Posterior vena cava (tissue), 2 donors: ENCODE measurements at regions of chr3 and their contacts with region 1.

Region 1: DNA sequence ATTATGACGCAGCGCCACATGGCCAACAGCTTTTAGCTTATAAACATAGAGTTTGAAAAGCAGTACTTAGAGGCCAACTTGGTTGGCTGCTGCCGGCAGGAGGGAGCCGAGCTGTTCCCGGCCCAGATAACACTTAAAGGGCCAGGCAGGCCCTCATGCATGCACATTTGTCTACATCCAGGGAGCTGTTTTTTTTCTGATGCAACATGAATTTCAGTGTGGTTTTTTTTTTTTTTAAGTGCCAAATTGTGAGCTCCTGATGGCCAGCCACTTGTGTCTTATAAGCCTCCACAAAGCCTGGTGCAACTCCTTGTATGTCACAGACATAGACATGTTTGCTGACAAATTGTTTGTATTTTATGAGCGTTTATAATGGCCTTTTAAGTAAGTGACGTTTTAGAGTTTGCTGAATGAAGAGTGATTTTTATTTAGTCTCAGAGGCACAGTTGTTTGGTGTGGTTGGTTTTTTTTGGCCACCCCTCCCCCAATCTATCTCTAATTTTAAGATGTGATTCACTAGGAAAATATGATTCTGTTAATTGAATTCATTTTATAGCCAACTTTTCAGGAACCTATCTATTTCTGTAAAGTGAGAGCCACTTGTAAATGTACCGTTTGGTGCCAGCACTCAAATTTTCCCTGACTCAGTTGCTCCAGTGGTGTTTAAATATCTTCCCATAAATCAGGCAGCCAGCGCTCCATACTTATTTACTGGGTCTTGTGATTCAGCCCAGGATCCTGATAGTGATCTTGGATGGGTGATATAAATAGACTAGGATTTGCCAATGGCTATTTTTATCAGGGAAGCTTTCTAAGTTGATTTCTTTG is 134.3 kb downstream of the VGLL4 start:
- DNase-seq: peak; percentile 89

Region 2: DNA sequence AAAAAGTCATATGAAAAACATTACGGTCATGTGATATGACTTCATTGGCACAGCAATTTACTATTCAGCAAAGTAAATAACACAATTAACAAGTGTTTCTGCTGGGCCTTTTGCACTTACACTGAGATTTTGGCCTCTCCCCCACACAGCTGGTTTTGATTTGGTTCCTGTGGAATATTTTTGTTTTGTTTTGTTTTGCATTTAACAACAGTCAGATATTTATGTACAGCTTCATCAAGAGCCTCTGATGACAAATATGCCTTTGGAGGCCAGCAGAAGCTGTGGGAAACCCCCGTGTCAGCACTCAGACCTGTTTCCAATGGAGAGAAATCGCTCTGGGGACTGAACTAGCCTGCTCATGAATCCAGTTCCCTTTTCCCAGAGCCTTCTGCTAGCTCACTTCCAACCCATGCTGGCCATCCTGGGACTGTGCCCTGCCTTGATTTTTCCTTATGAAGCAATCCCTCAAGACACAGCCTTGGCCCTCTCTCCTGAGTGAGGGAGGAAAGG is 75.3 kb before region 1 on chr3:
- intact Hi-C with region 1: loop called in 1 of 2 experiments (anchors 10 kb)
- DNase-seq: peak; percentile 84

Region 3: DNA sequence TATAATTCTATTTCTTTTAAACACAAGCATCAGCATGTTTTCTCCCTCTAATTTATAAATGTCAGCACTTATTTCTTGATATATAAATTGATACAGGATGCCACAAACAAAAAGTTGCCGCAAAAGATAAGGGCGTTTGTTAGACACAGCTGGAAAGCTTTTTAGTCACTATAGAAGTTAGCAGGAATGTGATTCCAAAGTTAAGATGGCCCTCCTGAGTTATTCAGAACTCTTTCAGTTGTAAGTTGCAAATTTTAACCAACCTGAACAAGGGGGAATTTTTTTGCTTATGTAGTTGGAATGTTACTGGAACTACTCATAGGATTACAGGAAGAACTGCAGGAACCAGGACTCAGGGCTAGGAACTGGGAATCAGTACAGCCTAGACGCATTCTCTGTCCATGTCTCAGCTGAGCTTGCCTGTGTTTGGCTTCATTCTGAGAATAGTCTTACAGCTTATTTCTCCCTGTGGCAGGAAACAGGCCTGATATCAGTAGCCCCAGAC is 31.9 kb before region 1 on chr3:
- intact Hi-C with region 1: no loop called
- DNase-seq: no peak